Endothelial cell of umbilical vein (primary cell): ENCODE measurements at regions of chr15 and their contacts with region 1.

Region 1: DNA sequence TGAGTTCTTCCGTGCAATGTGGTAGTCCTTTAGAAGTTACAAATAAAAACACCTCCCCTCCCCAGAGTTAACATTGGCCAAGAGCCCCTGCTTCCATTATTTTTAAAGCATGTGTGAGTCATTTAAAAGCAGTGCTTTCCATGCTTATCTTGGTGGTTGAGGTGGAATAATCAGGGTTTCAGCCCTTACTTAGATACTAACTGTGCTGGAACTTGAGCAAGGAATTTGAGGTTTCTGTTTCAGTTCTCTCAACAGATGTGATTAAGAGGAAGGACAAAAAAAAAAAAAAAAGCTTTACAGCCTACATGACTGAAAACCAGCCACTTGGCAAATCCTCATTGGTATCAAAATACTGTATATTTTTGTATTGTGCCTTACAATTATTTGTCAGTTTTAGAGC is 64.5 kb downstream of the CGNL1 start:
- DNase-seq: peak; percentile 70
- H3K4me3 ChIP-seq: no peak overlapping the region
- H3K27ac ChIP-seq: no peak overlapping the region
- H3K4me1 ChIP-seq: peaks cover 14% of the 10 kb centered on the region
- H3K27me3 ChIP-seq: no peaks in the 10 kb centered on the region
- CTCF ChIP-seq: no peak
- POLR2A ChIP-seq: no peak

Region 2: DNA sequence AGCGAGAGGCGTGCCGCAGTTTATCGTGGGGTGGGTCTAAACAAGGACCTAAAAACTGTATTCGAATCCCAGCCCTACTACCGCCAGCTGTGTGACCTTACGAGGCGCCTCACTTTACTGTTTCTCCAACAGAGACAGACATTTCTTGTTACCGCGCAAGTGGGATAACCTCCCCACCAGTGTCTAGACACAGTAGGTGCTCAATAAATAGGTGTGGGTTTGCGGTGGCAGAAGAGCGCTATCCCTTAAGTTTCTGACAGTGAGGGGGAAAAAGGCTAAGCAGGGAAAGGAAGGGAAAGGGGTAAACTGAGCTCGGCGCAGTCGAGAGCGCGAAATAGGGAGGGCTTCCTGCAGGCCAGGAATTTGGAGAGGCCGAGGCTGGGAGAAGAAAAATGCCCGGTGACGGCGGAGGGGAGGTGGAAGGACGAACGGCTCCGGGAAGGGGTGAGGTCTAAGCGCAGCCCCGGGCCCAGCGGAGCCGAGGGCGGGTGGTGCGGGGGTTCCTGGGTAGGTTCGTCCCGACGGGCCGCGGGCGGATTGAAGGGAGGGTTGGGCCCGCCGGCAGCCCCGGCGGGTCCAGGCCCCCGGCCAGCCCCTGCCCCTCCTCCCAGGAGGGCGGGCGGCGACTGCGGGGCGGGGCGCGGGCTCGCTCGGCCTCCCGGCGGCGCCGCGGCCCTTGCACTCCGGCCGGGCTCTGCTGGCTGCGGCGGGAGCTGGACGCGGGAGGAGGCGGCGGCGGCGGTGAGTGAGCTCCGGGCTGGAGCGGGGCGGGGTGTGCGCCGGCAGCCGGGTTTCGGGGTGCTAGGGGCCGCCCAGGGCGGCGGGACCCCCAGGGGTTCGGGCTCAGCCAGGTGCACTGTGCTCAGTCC is 64.7 kb before region 1 on chr15 and contains the start of gene CGNL1:
- CTCF ChIA-PET with region 1: interaction called, 3 read pairs
- POLR2A ChIA-PET with region 1: no interaction called
- dilution Hi-C with region 1: no loop called
- intact Hi-C with region 1: loop called (anchors 5 kb)
- DNase-seq: peak; percentile 49
- H3K4me3 ChIP-seq: peak within 1 kb of the TSS; percentile 15 to 87 (median 53)
- H3K27ac ChIP-seq: peak within 1 kb of the TSS; percentile 2
- H3K4me1 ChIP-seq: peaks cover 25% of the 10 kb centered on the region
- H3K27me3 ChIP-seq: peaks cover 0 to 3% of the 10 kb centered on the region in 2 experiments
- CTCF ChIP-seq: no peak
- POLR2A ChIP-seq: peak; percentile 66
- total RNA-seq, gene CGNL1: 25.7 and 27.1 TPM in 2 replicates

Region 3: DNA sequence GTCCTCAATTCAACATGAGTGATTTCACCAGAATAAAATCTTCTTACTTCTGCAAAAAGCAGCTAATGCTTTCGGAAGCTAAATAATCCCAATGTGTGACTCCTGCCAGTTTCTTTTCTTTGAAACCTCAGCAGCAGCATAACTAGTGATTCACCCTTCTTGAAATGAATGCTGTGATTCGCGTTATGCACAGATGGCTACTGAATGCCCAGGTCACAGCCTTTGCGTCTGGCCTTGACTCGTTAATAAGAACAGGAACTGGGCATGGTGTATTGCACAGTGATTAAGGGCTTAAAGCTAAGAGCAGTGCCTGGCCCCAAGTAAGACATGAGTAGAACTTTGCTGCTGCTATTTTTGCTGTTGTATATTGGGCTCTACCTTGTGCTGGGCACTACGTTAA is 45.5 kb before region 1 on chr15:
- CTCF ChIA-PET with region 1: interaction called, 4 read pairs
- POLR2A ChIA-PET with region 1: no interaction called
- dilution Hi-C with region 1: no loop called
- intact Hi-C with region 1: loop called (anchors 5 kb)
- DNase-seq: peak; percentile 91
- H3K4me3 ChIP-seq: no peak overlapping the region
- H3K27ac ChIP-seq: no peak overlapping the region
- H3K4me1 ChIP-seq: peaks cover 56% of the 10 kb centered on the region
- H3K27me3 ChIP-seq: no peaks in the 10 kb centered on the region
- CTCF ChIP-seq: no peak
- POLR2A ChIP-seq: no peak

Region 4: GRCh38 chr15:57485869-57486268 is 45.1 kb after region 1 on chr15:
- CTCF ChIA-PET with region 1: no interaction called
- POLR2A ChIA-PET with region 1: no interaction called
- dilution Hi-C with region 1: no loop called
- intact Hi-C with region 1: loop called (anchors 5 kb)
- DNase-seq: peak; percentile 82
- H3K4me3 ChIP-seq: no peak overlapping the region
- H3K27ac ChIP-seq: peak overlapping the region; percentile 56
- H3K4me1 ChIP-seq: peaks cover 22% of the 10 kb centered on the region
- H3K27me3 ChIP-seq: no peaks in the 10 kb centered on the region
- CTCF ChIP-seq: no peak
- POLR2A ChIP-seq: no peak